Sciatic nerve (tissue), 2 donors: ENCODE measurements at regions of chr3 and their contacts with region 1.

Region 1: DNA sequence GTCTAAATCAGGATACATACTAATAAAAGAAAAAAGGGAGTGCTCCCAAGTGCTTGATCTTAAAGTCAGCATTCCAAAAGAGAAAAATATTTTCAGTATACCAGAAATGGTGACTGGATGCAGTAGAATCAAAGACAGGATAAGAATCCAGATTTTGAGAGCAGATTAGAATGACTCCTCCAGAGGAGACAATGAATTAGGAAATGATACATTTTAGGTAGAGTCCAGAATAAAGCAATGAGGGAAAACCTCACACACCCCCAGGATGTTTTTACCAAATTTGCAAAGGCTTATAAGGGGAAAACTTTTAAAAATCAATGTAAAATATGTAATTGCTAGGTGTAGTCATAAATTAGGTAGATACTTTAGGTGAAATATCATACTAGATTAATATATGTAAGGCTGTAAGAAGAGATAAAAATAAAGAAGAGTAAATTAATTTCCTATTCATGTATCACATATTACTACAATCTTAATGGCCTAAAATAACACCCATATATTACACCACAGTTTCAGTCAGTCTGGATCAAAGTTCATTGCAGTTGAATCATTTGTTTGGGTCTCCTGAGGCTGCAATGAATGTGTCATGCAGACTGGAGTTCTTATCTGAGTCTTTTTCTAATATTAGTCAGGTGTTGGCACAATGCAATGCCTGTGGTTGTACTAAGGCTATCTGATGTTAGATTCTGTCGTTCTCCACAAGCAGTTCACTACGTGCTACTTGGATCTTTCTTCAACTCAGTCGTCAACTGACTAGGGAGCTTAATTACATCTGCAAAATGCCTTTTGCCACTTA is 547.8 kb upstream of the EPHA6 start:
- DNase-seq: no peak
- ATAC-seq: no peak

Region 2: DNA sequence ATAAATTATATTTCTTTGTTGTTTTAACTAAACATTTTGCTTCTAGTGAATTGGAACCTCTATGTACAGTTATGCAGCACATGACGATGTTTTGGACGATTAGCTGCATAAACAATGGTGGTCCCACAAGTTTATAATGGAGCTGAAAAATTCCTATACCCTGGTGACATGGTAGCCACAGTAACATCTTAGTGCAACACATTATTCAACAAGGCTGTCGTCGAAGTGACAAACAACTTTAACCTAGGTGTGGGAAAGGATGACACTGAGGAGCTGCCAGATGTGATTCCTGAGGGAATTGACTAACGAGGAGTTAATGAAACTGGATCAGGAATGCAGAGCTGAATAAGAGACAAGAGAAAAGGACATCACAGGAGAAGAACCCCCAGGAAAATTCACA is 41.1 kb before region 1 on chr3:
- intact Hi-C with region 1: loop called (anchors 1 kb)
- DNase-seq: no peak
- ATAC-seq: no peak